Dorsolateral prefrontal cortex (tissue), 120 donors: ENCODE measurements at regions of chr15 and their contacts with region 1.

Region 1: GRCh38 chr15:45522328-45523160 is at the start of gene SLC30A4:
- DNase-seq: peak; percentile 44 to 85 (median 66)
- H3K4me3 ChIP-seq: peak within 1 kb of the TSS; percentile 50 to 96 (median 84)
- H3K27ac ChIP-seq: peak within 1 kb of the TSS; percentile 35 to 98 (median 91)
- H3K27me3 ChIP-seq: no peaks in the 10 kb centered on the region
- CTCF ChIP-seq: peak; percentile 9 to 85 (median 65)
- total RNA-seq, gene SLC30A4: 11.4 to 24.5 (median 17.2) TPM

Region 2: GRCh38 chr15:45481135-45481534 is 41.4 kb before region 1 on chr15:
- intact Hi-C with region 1: no loop called
- DNase-seq: no peak
- H3K4me3 ChIP-seq: no peak overlapping the region
- H3K27ac ChIP-seq: peak overlapping the region in 26 of 59 donors; percentile 0 to 72 (median 31)
- H3K27me3 ChIP-seq: no peaks in the 10 kb centered on the region
- CTCF ChIP-seq: no peak

Region 3: DNA sequence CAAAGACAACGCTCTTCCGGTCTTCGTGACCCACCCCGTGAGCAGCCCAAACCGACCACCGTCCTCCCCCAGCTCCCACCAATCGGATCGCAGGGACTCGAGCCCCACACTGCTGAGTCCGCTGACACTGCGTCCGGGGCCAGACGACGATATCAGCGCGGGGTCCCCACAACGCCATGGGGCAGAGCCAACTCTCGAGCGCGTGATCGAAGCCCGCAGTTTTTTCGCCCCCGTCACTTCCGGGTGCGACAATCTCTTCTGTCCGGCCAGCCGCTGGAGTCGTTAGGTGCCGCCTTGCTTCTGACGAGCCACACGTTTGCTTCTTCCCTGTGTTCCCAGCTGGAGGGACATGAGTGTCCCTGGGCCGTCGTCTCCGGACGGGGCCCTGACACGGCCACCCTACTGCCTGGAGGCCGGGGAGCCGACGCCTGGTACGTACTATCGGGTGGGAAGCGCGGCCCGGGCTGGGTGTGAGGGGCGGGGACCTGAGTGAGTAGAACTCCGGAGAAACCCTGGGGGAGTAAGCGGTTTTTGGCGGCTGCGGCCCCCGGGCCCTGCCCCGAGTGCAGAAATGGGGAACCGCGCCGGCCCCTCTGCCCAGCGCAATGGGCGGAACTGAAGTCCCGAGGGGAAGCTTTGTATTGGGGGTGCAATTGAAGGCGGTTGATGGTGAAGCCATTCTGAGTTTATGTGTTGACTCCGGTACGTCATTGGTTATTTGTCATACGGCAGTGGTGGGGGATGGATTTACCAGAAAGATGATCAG is 64.7 kb after region 1 on chr15 and contains the start of gene BLOC1S6:
- intact Hi-C with region 1: loop called (anchors 1 to 2 kb)
- DNase-seq: peak; percentile 84 to 94 (median 92)
- H3K4me3 ChIP-seq: peak within 1 kb of the TSS; percentile 68 to 99 (median 89)
- H3K27ac ChIP-seq: peak within 1 kb of the TSS; percentile 94 to 100 (median 99)
- H3K27me3 ChIP-seq: no peaks in the 10 kb centered on the region
- CTCF ChIP-seq: peak in 24 of 56 donors; percentile 2 to 51 (median 23)
- total RNA-seq, gene BLOC1S6: 30.3 to 80.3 (median 55.0) TPM

Region 4: GRCh38 chr15:45611305-45611704 is 88.8 kb after region 1 on chr15:
- intact Hi-C with region 1: loop called (anchors 5 kb)
- DNase-seq: no peak
- H3K4me3 ChIP-seq: no peak overlapping the region
- H3K27ac ChIP-seq: peak overlapping the region in 21 of 59 donors; percentile 1 to 67 (median 37)
- H3K27me3 ChIP-seq: no peaks in the 10 kb centered on the region
- CTCF ChIP-seq: peak; percentile 34 to 74 (median 58)